ENCODE measurements at regions of chr2 and their contacts with region 1.

Region 1: DNA sequence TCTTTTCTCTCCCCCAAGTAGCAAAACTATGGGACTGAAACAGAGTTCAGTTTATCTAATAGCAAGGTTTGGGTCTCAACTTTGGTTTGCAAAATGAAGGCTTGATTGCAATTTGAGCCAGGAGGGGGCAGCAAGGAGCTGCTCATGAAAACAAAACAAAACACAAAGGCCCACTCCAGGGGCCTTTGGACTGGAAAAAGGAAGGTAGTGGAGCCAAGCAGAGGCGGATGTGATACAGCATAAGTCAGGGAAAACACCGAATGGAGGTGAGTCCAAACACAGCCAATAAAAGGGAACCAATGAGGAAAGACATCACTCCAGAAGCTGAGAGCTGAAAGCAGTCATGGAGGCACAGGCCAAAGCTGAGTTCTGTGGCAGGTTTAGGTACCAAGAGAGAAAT is 799.7 kb upstream of the ACVR2A start:
- DNase-seq: peak; percentile 26
- ATAC-seq: peak; percentile 83
- H3K4me3 ChIP-seq: no peak overlapping the region
- H3K27ac ChIP-seq: no peak overlapping the region
- H3K4me1 ChIP-seq: no peaks in the 10 kb centered on the region
- H3K27me3 ChIP-seq: no peaks in the 10 kb centered on the region
- CTCF ChIP-seq: peak; percentile 56 to 79 (median 72); a peak in 5 of 6 replicates
- POLR2A ChIP-seq: no peak
- RAD21 ChIP-seq: peak; percentile 68

Region 2: DNA sequence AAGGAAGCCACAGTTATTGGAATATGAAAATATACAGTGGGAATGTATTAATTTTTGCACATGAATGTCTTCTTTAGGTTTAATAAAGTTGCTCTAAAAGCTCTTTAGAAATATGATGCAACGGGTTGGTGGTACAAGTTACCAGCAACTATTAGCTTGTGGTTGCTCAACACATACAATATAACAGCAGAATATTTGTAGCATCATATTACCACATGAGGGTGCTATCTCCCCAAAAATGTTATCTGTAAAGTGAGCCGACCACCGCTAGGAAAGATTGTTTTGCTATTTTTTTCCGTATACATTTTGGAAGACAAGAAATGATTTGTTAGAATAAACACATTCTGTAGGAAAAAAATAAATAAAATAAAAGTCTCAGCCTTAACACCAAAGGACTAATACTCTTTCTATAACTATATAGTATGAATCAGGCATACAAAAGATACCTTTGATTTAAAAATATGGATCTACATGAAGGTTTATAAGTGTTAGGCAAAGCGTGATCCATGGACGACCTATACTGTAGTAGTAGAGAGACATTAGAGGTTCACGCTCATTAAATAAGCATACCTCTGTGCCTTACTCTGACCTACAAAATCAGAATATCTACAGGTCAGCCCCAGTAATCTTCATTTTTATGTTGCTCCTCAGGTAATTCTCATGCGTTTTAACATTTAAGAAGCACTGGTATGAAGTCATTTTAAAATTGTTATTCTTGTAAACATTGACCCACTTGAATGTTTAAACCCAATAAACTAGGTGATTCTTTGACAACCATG is 310.9 kb before region 1 on chr2:
- CTCF ChIA-PET with region 1: interaction called, 6 read pairs
- POLR2A ChIA-PET with region 1: no interaction called
- RAD21 ChIA-PET with region 1: no interaction called
- intact Hi-C with region 1: loop called (anchors 2 kb)
- DNase-seq: peak; percentile 60
- ATAC-seq: peak; percentile 99
- H3K4me3 ChIP-seq: no peak overlapping the region
- H3K27ac ChIP-seq: no peak overlapping the region
- H3K4me1 ChIP-seq: no peaks in the 10 kb centered on the region
- H3K27me3 ChIP-seq: no peaks in the 10 kb centered on the region
- CTCF ChIP-seq: peak; percentile 44 to 75 (median 61); a peak in 4 of 6 replicates
- POLR2A ChIP-seq: no peak
- RAD21 ChIP-seq: peak; percentile 81

Region 3: DNA sequence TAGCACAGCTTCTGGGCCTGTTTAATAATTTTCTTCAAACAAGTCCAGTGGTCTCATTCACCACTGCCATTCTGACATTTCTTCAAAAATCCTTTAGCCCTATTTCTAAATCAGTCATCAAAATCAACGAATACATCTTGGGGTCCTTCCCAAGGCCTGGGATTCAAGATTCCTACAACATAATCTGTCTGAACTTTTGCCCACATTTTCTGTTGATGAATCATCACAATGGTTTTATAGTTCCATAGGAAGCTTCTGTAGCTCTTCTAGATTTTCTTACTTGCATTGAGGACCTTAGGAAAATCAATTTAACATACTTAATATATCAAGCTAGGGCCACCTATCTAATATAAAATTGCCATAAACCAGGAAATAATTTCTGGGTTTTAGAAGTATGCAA is 12.1 kb before region 1 on chr2:
- CTCF ChIA-PET with region 1: interaction called, 14 read pairs
- POLR2A ChIA-PET with region 1: no interaction called
- RAD21 ChIA-PET with region 1: interaction called in 1 of 2 experiments, 3 read pairs
- intact Hi-C with region 1: no loop called
- DNase-seq: no peak
- ATAC-seq: no peak
- H3K4me3 ChIP-seq: no peak overlapping the region
- H3K27ac ChIP-seq: no peak overlapping the region
- H3K4me1 ChIP-seq: peaks cover 23 to 31% of the 10 kb centered on the region in 2 experiments; a peak in 3 of 4 replicates
- H3K27me3 ChIP-seq: no peaks in the 10 kb centered on the region
- CTCF ChIP-seq: no peak
- POLR2A ChIP-seq: no peak
- RAD21 ChIP-seq: no peak

Region 4: DNA sequence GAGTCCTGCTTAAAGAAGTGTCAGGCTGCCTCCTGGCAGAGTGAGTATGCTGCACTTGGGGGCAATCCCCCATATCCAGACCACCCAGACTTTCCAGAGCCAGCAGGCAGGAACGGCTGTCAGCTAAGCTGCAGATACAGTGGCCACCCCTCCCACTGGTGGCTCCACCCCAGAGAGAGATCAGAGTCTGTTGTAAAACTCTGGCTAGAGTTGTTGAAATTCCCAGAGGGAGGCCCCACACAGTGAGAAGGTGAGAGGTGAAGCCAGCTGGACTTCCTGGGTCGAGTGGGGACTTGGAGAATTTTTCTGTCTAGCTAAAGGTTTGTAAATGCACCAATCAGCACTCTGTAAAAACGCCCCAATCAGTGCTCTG is 265.9 kb after region 1 on chr2:
- CTCF ChIA-PET with region 1: no interaction called
- POLR2A ChIA-PET with region 1: no interaction called
- RAD21 ChIA-PET with region 1: no interaction called
- intact Hi-C with region 1: no loop called
- DNase-seq: no peak
- ATAC-seq: no peak
- H3K4me3 ChIP-seq: no peak overlapping the region
- H3K27ac ChIP-seq: no peak overlapping the region
- H3K4me1 ChIP-seq: no peaks in the 10 kb centered on the region
- H3K27me3 ChIP-seq: no peaks in the 10 kb centered on the region
- CTCF ChIP-seq: no peak
- POLR2A ChIP-seq: no peak
- RAD21 ChIP-seq: no peak